CD4-positive, alpha-beta memory T cell (primary cell): ENCODE measurements at regions of chr3 and their contacts with region 1.

Region 1: GRCh38 chr3:143775459-143775858 is 72.8 kb downstream of the SLC9A9 start:
- DNase-seq: peak in 4 of 5 donors; percentile 40 to 52 (median 43)
- H3K4me3 ChIP-seq: no peak overlapping the region
- H3K4me3 Mint-ChIP-seq: peak overlapping the region in 2 of 8 donors; percentile 17 to 45
- H3K27ac ChIP-seq: no peak overlapping the region
- H3K27ac Mint-ChIP-seq: no peak overlapping the region
- H3K4me1 ChIP-seq: no peaks in the 10 kb centered on the region
- H3K4me1 Mint-ChIP-seq: peaks cover 0 to 4% (median 1%) of the 10 kb centered on the region in 4 donors
- H3K27me3 ChIP-seq: no peaks in the 10 kb centered on the region
- H3K27me3 Mint-ChIP-seq: no peaks in the 10 kb centered on the region

Region 2: DNA sequence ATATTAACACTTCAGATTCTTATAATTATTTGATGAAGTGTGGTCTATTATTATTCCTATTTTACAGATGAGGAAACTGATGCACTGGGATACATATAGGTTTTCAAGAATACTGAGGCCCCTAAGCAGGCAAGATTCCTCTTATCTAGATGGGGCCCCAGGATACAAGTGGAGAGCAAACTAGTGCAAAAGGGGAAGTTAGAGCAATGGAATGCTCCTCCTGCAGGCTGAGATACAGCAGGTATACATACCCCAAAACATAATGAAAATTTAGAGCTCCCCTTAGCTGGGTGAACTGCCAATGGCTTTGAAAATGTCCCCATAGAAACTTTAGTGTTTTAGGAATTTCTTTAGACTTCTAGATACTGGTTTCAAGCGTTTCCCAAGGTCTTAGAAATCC is 408.8 kb before region 1 on chr3:
- CTCF ChIA-PET with region 1: no interaction called
- POLR2A ChIA-PET with region 1: no interaction called
- intact Hi-C with region 1: no loop called
- DNase-seq: no peak
- H3K4me3 ChIP-seq: no peak overlapping the region
- H3K4me3 Mint-ChIP-seq: no peak overlapping the region
- H3K27ac ChIP-seq: no peak overlapping the region
- H3K27ac Mint-ChIP-seq: no peak overlapping the region
- H3K4me1 ChIP-seq: peaks cover 12% of the 10 kb centered on the region
- H3K4me1 Mint-ChIP-seq: peaks cover 3 to 26% (median 10%) of the 10 kb centered on the region in 4 donors
- H3K27me3 ChIP-seq: no peaks in the 10 kb centered on the region
- H3K27me3 Mint-ChIP-seq: no peaks in the 10 kb centered on the region

Region 3: DNA sequence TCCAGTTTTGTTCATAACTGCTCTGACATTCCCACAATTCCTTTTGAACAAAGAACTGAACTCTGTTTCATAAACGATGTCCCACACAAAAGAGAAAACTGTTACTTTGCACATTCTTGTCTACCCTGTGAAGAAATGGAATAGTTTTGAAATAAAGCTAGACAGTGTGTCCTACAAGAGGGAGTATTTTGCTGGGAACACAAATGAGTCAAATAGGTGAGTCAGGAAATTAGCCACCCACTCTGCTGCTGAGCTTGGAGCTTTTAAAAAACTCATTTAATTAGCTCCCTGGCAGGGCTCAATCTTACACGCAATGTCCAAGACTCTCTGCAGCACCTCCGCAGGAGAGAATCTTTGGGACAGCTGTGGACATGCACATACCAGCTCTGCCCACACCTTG is 120.6 kb before region 1 on chr3:
- CTCF ChIA-PET with region 1: no interaction called
- POLR2A ChIA-PET with region 1: no interaction called
- intact Hi-C with region 1: no loop called
- DNase-seq: no peak
- H3K4me3 ChIP-seq: no peak overlapping the region
- H3K4me3 Mint-ChIP-seq: no peak overlapping the region
- H3K27ac ChIP-seq: no peak overlapping the region
- H3K27ac Mint-ChIP-seq: no peak overlapping the region
- H3K4me1 ChIP-seq: no peaks in the 10 kb centered on the region
- H3K4me1 Mint-ChIP-seq: no peaks in the 10 kb centered on the region
- H3K27me3 ChIP-seq: no peaks in the 10 kb centered on the region
- H3K27me3 Mint-ChIP-seq: no peaks in the 10 kb centered on the region

Region 4: DNA sequence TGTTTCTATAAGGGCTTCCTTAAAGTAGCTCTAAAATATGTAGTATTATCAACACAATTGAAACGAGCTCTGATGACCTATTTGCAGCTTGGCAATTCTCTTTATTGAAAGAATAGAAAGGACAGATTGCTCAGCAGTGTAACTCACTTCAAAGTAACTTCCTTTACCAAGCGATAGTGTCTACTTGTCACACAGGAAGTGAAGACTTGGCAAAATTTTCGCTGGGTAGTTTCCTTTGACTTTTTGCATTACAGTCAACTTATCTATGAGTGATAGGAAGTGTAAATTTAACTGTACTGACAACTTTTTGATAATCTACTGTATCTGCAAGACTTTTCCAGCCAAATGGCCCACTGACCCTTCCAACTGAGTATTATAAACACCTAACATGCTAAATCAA is 50.1 kb after region 1 on chr3:
- CTCF ChIA-PET with region 1: interaction called, 4 read pairs
- POLR2A ChIA-PET with region 1: no interaction called
- intact Hi-C with region 1: loop called (anchors 5 kb)
- DNase-seq: peak; percentile 35 to 61 (median 46)
- H3K4me3 ChIP-seq: no peak overlapping the region
- H3K4me3 Mint-ChIP-seq: peak overlapping the region in 7 of 8 donors; percentile 26 to 75 (median 56)
- H3K27ac ChIP-seq: no peak overlapping the region
- H3K27ac Mint-ChIP-seq: peak overlapping the region; percentile 70 to 93 (median 84)
- H3K4me1 ChIP-seq: peaks cover 38% of the 10 kb centered on the region
- H3K4me1 Mint-ChIP-seq: peaks cover 39 to 59% (median 45%) of the 10 kb centered on the region in 4 donors
- H3K27me3 ChIP-seq: no peaks in the 10 kb centered on the region
- H3K27me3 Mint-ChIP-seq: no peaks in the 10 kb centered on the region

Region 5: DNA sequence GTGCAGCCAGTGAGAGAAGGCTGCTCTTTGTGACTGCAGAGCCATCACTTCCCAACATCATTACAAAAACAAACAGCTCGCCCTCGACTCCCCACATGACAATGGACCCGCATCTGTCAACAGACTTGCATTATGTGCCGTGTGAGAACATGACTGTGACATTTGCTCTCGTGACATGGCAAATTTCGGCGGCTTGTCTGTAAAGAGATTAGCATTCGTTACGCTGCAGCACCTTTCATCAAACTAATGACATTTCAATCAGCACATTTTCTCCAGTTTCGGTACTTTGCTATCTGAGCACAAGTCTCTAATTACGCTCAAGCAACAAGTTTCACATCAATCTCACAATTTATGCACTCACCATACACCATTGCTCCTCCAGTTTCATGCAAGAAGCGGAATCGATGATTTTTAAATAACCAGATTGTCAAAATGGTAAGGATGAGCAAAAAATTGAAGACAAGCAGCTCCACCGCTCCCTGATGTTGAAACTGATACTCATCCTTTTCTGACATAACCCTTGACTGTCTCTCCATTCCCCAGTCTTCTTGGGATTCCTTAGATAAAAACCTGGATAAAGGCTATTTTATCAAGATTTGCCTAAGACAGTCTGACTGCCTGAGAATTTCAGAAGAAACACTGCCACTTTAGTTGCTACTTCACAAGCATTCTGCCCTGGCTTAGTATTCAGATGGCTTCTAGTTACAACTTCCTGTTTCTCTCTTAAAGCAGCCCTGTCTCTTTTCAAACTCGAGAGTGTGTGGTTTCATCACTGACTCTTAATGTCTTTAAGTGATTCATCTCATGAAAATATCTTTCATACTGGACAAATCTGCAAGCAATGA is 72.5 kb after region 1 on chr3 and contains the start of gene SLC9A9:
- CTCF ChIA-PET with region 1: interaction called, 7 read pairs
- POLR2A ChIA-PET with region 1: no interaction called
- intact Hi-C with region 1: loop called (anchors 1 kb)
- DNase-seq: peak; percentile 40 to 51 (median 46)
- H3K4me3 ChIP-seq: peak within 1 kb of the TSS; percentile 85 to 98
- H3K4me3 Mint-ChIP-seq: peak within 1 kb of the TSS; percentile 95 to 99 (median 98)
- H3K27ac ChIP-seq: peak within 1 kb of the TSS; percentile 58
- H3K27ac Mint-ChIP-seq: peak within 1 kb of the TSS; percentile 79 to 97 (median 91)
- H3K4me1 ChIP-seq: peaks cover 64% of the 10 kb centered on the region
- H3K4me1 Mint-ChIP-seq: peaks cover 45 to 71% (median 55%) of the 10 kb centered on the region in 4 donors
- H3K27me3 ChIP-seq: no peaks in the 10 kb centered on the region
- H3K27me3 Mint-ChIP-seq: no peaks in the 10 kb centered on the region
- total RNA-seq, gene SLC9A9: 30.8 to 34.8 TPM

Region 6: DNA sequence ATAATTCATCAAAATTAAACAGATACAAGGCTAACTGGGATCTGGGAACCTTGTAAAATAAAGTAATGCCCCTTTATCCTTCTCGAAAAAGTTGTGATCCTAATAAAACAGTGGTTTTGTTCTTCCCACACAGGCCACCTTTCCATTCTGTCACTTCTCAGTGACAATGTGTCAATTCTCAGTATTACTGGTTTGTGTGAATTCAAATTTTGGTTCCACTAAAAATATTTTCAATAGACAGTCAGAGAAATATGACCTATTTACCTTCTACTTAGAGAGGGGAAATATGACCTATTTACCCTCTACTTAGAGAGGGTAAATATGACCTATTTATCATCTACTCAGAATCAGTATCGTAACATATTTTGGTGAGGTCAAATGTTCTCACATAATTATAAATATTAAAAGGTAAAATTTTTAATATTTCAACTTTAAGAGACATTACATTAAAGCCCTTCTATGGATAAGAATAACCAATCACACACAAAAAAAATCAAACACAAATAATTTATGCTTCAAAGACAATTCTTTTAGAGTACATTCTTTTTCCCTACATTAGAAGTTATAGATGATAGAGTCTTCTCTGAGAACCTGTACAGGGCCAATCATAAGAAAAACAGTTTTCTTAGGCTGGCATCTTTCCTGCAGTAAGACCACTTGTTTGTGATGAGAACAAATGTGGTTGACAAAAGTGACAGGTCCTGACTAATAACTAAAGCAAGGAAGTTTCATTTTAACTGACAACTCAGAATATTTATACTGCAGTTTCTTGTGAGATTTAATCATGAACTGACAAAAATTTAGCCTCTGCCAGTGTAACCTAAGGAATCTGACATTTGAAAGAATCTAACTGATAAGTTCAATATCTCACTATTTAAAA is 519.4 kb after region 1 on chr3:
- CTCF ChIA-PET with region 1: no interaction called
- POLR2A ChIA-PET with region 1: no interaction called
- intact Hi-C with region 1: no loop called
- DNase-seq: no peak
- H3K4me3 ChIP-seq: no peak overlapping the region
- H3K4me3 Mint-ChIP-seq: peak overlapping the region in 1 of 8 donors; percentile 20
- H3K27ac ChIP-seq: no peak overlapping the region
- H3K27ac Mint-ChIP-seq: no peak overlapping the region
- H3K4me1 ChIP-seq: no peaks in the 10 kb centered on the region
- H3K4me1 Mint-ChIP-seq: peaks cover 0 to 7% (median 0%) of the 10 kb centered on the region in 4 donors
- H3K27me3 ChIP-seq: no peaks in the 10 kb centered on the region
- H3K27me3 Mint-ChIP-seq: no peaks in the 10 kb centered on the region